Activated CD4-positive, alpha-beta T cell treated with anti-CD3 and anti-CD28 coated beads, Interleukin-2, amount 10 ng/mL, durations not matched to agents 24 days and 14 days (primary cell): ENCODE measurements at regions of chr10 and their contacts with region 1.

Region 1: DNA sequence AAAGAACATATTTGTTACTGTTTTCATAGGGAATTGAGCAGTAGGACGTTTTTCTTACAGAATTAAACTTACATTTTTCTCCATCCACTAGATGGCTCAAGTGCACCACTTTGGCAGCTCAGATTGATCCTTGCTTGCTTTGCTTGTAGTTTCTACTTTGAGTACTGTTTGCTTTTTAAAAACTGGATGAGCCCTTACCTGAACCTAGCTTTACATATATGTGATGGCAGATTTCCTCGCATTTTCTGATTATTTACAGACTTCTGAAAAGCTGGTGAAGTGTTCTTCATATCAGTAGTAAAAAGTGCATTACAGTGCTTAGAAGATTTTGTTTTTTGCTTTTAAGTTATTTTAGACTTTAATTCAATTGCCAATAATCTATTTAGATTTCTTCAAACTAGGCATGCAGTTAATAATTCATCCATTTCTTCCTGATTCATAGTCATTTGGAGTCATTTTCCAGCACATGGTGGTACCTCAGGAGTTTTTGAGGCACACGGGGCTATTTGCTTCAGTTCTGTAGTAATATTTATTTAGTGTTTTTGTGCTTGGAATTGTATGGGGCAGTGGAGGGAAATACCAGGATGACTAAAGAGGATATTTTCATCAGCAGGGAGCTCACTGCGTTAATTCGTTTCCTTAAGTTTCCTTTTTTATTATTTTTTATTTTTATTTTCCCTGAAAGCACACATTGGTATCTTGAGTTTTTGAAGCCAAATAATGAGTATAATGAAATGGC is 57.3 kb downstream of the MAPK8 start:
- DNase-seq: peak; percentile 80
- H3K4me3 Mint-ChIP-seq: no peak overlapping the region
- H3K27ac Mint-ChIP-seq: no peak overlapping the region
- H3K4me1 Mint-ChIP-seq: peaks cover 4% of the 10 kb centered on the region
- H3K27me3 Mint-ChIP-seq: no peaks in the 10 kb centered on the region

Region 2: GRCh38 chr10:48306265-48306869 is 57.4 kb before region 1 on chr10 and contains the start of gene MAPK8:
- intact Hi-C with region 1: no loop called
- DNase-seq: peak; percentile 97
- H3K4me3 Mint-ChIP-seq: peak within 1 kb of the TSS; percentile 82
- H3K27ac Mint-ChIP-seq: peak within 1 kb of the TSS; percentile 83
- H3K4me1 Mint-ChIP-seq: peaks cover 24% of the 10 kb centered on the region
- H3K27me3 Mint-ChIP-seq: peaks cover 2% of the 10 kb centered on the region
- total RNA-seq, gene MAPK8: 46.2 and 46.4 TPM in 2 replicates

Region 3: DNA sequence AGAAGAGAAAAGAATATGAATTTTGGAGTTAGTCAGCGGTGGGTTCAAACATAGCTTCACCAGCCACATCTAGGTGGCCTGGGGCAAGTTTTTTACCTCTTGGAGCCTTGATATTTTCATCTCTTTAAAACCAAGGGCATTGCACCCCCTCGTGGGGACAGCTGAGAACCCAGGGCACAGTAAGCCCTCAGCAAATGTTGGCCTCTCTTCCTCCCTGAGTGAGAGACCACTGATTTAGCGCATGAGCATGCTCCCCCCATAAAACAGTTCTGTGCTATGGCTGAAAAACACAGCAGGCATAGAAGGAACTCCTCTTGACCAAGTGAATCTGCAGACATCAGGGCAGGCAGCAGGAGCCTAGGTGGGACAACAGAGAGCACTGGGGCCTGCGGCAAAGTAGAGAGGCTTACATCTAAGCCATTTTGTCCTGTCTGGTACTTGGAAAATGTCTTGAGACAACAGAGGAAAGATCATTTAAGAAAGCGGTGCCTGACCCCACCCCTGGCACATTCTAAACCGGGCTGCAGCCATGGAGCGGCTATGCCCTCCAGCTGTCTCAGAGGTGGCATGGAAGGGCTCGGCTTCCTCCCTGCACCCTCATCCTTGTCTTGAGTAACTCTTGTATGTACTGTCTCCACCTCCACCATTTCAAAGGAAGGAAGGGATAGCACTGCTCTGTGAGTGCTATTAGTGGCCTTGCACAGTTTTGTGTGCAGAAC is 146.3 kb after region 1 on chr10:
- intact Hi-C with region 1: loop called (anchors 5 kb)
- DNase-seq: no peak
- H3K4me3 Mint-ChIP-seq: no peak overlapping the region
- H3K27ac Mint-ChIP-seq: no peak overlapping the region
- H3K4me1 Mint-ChIP-seq: no peaks in the 10 kb centered on the region
- H3K27me3 Mint-ChIP-seq: peaks cover 7% of the 10 kb centered on the region

Region 4: DNA sequence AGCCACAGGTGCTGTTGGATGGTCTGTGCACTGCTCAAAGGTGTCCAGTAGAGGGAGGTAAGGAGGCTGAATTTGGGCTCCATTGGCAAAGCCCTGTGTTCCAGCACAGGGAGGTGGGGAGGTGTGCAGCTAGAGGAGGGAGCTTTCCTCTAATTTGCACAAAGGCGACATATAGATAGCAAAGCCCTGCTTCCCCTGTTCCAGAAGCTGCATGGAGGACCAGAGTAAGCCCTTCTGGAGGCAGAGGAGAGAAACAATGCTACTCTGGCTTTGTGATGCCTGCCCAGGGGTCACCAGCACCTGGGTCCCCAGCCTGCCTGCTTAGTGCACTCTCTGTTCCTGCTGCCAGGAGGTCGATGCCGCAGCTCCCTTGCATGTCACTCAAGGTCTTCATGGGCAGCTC is 244.5 kb after region 1 on chr10:
- intact Hi-C with region 1: loop called (anchors 1 kb)
- DNase-seq: peak; percentile 76
- H3K4me3 Mint-ChIP-seq: no peak overlapping the region
- H3K27ac Mint-ChIP-seq: no peak overlapping the region
- H3K4me1 Mint-ChIP-seq: no peaks in the 10 kb centered on the region
- H3K27me3 Mint-ChIP-seq: peaks cover 31% of the 10 kb centered on the region